IMR-90 (cell line): ENCODE measurements at regions of chr2 and their contacts with region 1.

Region 1: DNA sequence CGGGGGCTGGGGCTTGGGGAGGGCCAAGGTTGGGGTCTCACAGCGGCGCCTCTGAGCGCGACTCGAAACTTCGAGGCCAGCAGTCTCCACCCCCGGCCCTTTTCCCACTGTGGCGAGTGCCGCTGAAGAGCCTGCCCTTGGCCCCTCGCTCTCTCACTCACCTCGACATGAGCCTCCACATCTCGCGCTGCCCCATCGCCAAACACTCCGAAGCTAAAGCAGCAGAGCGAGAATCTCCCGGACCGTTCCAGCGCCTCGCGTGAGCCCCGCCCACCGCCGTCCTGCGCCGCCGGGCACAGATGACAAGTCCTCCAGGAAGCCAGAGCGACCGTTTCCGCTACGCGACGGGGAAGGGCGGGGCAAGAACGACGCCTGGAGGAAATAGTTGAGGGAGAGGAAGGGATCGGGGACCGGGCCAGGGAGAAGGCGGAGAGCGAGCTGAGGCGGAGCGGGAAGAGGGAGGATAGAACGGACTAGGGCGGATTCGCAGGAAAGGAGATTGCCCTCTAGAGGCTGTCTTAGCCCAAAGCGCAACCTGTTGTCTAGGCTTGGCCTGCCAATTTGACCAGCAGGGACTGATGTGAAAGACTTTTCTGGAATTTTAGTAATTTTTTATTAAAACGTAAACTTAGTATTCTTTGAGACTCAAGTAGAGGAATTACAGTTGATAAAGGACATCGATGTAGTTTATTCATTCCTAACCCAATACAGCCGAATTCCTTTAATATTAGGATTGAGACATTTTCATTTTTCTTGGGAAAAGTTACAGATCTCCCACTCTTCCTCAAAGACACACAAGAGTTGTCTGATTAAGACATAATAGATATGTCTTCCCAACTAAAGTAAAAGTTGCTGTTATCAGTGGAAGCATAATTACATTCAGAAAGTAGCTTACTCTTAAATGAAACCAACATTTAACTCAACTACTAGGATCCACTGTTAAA is at the start of gene HIBCH:
- DNase-seq: peak; percentile 98
- ATAC-seq: peak; percentile 97
- H3K4me3 ChIP-seq: peak within 1 kb of the TSS; percentile 62
- H3K27ac ChIP-seq: peak within 1 kb of the TSS; percentile 38
- H3K4me1 ChIP-seq: peaks cover 5% of the 10 kb centered on the region
- H3K27me3 ChIP-seq: no peaks in the 10 kb centered on the region
- CTCF ChIP-seq: peak; percentile 91
- POLR2A ChIP-seq: no peak
- RAD21 ChIP-seq: peak; percentile 46
- total RNA-seq, gene HIBCH: 8.8 and 15.6 TPM in 2 replicates

Region 2: DNA sequence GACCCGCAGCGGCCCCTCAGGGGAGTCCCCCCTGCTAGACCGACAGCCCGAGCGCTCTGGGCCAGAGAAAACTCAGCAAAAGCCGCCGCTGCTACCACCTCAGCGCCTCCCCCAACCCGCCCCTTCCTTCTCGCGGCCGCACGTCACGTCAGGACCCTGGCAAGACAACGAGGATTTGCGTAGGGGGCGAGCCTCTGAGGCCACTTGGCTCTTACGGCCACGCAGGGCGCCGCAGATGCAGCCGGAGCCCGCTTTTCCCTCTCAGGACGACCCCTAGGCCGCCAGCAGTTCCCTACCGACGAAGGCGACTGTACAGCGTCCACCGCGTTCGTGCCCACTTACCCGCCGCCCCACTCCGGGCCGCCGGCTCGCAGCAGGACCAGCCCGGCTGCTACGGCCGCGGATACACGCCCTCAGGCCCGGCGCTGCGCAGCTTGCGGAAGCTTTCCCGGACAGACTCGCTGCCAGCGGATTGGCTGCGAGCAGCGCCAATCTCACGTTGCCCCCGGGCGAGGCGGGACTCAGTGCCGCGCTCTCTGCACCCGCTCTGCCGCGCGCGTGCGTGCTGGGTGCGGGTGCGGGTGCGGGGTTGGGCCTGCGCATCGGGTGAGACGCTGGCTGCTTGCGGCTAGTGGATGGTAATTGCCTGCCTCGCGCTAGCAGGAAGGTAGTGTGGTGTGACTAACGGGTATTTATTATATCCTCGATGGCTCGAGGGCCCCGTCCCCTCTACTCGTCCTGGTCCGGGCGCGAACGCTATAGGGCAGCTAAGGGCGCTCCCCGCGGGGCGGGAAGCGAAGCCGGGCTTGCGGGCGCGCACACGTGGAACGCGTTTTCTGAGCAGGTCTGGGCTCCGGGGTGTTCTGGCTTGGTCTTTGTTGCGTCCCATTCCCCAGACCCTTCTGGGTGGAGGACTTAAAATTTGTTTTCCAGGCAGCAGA is 535.6 kb before region 1 on chr2 and contains the starts of genes ORMDL1 and PMS1:
- CTCF ChIA-PET with region 1: no interaction called
- POLR2A ChIA-PET with region 1: no interaction called
- dilution Hi-C with region 1: no loop called
- in situ Hi-C with region 1: no loop called
- intact Hi-C with region 1: loop called (anchors 10 kb)
- DNase-seq: peak; percentile 95
- ATAC-seq: peak; percentile 98
- H3K4me3 ChIP-seq: peak within 1 kb of the TSS; percentile 80
- H3K27ac ChIP-seq: peak within 1 kb of the TSS; percentile 89
- H3K4me1 ChIP-seq: peaks cover 4% of the 10 kb centered on the region; the same call in 1 of the 2 replicates
- H3K27me3 ChIP-seq: no peaks in the 10 kb centered on the region
- CTCF ChIP-seq: no peak
- POLR2A ChIP-seq: peak; percentile 90
- RAD21 ChIP-seq: no peak
- total RNA-seq, gene ORMDL1: 35.8 and 39.2 TPM in 2 replicates
- total RNA-seq, gene PMS1: 10.6 and 20.0 TPM in 2 replicates

Region 3: GRCh38 chr2:190235101-190235500 is 84.7 kb before region 1 on chr2:
- CTCF ChIA-PET with region 1: no interaction called
- POLR2A ChIA-PET with region 1: no interaction called
- dilution Hi-C with region 1: no loop called
- in situ Hi-C with region 1: no loop called
- intact Hi-C with region 1: no loop called
- DNase-seq: no peak
- ATAC-seq: no peak
- H3K4me3 ChIP-seq: no peak overlapping the region
- H3K27ac ChIP-seq: no peak overlapping the region
- H3K4me1 ChIP-seq: no peaks in the 10 kb centered on the region
- H3K27me3 ChIP-seq: no peaks in the 10 kb centered on the region
- CTCF ChIP-seq: no peak
- POLR2A ChIP-seq: no peak
- RAD21 ChIP-seq: no peak